ENCODE measurements at regions of chr2 and their contacts with region 1.

Region 1: GRCh38 chr2:96065381-96065930 is 30.7 kb upstream of the GPAT2 start:
- DNase-seq: no peak
- ATAC-seq: no peak

Region 2: DNA sequence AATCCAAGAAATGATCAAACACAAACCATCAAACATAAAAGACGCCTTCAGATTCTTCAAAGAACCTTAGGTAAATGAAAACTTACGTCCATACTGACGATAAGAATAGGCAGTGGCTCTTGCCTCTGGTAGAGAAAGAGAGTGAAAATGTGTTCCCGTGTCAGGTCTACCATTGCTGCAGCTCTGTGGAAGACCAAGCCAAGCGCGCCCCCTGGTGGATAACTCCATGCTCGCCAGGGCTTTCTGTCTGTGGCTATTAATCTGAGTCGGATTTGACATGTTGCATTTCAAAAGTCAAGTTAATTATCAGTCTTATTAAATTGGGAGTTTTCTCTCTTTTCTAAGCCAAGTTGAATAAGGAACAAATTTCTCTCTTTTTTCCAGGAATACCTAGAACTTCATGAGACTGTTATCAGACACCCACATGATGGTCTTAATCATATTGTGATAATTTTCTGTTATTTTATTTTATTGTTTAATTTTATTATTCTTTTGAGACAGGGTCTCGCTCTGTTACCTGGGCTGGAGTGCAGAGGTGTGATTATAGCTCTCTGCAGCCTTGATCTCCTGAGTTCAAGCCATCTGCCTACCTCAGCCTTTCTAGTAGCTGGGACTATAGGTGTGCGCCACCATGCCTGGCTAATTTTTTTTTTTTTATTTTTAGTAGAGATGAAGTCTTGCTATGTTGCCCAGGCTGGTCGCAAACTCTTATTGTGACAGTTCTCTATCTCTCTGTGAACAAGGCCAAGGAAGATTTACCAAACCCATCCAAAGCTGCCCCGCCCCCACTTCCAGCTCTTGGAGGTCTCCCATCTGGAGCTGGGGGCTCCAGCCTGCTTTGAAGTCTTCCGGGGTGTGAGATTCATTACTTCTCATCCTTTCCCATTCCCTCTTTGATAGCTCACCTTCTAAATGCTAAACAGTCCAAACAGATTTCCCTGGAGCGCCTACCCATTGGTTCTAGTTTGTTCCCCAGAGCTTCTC is 1632.1 kb after region 1 on chr2:
- intact Hi-C with region 1: loop called (anchors 10 kb)
- DNase-seq: peak; percentile 96
- ATAC-seq: peak; percentile 96

Measured in sciatic nerve (tissue), 2 donors.